Uterus (tissue), 4 donors: ENCODE measurements at regions of chr4 and their contacts with region 1.

Region 1: DNA sequence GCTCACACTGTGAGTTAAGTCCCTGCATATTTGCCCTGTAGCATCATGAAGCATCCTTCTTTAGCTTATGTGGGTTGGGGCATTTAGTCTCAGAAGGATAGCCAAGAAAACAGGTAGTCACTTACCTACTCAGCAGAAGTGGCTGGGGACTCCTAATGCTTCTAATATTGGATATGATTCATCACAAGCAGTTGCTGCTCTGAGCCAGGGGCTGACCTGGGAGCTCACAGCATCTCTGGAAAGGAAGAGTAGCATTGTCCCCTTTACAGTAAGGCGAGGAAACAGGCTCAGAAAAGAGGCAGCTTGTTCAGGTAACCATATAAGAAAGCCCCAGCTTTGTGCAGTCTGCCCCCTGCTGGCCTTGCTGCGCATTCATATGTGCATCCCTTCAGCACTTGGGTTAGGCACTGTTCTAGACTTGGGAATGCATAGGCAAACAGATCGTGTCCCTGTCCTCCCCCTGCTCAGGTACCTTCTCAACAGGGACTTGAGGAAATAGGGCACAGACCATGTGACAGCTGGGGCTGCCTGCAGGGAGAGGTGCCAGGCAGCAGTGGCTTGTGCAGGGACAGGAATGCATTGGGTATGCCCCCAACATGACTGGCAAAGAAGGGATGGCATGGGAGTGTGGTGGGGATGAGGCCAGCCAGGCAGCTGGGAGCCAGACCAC is 35.7 kb upstream of the TBC1D14 start:
- DNase-seq: peak; percentile 62 to 67
- H3K4me3 ChIP-seq: no peak overlapping the region
- H3K27ac ChIP-seq: no peak overlapping the region
- H3K4me1 ChIP-seq: no peaks in the 10 kb centered on the region
- H3K27me3 ChIP-seq: no peaks in the 10 kb centered on the region
- CTCF ChIP-seq: peak; percentile 65 to 83 (median 70)
- POLR2A ChIP-seq: no peak

Region 2: GRCh38 chr4:6298035-6298434 is 575.9 kb before region 1 on chr4:
- intact Hi-C with region 1: no loop called
- DNase-seq: no peak
- H3K4me3 ChIP-seq: no peak overlapping the region
- H3K27ac ChIP-seq: no peak overlapping the region
- H3K4me1 ChIP-seq: no peaks in the 10 kb centered on the region
- H3K27me3 ChIP-seq: no peaks in the 10 kb centered on the region
- CTCF ChIP-seq: no peak
- POLR2A ChIP-seq: no peak

Region 3: DNA sequence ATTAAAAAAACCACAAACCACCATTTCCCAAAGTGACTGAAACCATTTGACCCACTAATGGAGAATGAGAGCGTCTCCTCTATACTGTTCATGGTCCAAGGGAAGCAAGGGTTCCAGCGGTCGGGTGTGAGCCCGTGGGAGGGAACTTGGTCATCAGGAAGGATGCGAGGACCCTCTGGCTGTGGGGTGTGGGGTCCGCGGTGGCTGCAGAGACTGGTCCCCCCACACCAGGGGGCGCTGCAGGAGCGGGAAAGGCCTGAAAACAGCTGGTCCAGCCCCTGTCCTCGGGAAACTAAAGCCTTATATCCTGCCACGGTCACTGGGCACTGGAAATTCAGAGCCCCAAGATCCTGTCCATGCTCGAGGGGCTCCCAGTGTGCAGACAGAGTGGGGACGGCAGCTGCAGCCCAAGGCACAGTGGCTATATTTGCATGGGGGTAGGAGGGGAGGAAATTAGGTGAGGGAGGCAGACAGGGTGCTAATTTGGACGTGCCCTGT is 153.7 kb before region 1 on chr4:
- intact Hi-C with region 1: loop called (anchors 5 kb)
- DNase-seq: peak; percentile 81 to 83
- H3K4me3 ChIP-seq: no peak overlapping the region
- H3K27ac ChIP-seq: no peak overlapping the region
- H3K4me1 ChIP-seq: peaks cover 0 to 5% of the 10 kb centered on the region in 2 donors
- H3K27me3 ChIP-seq: no peaks in the 10 kb centered on the region
- CTCF ChIP-seq: peak; percentile 93 to 96 (median 94)
- POLR2A ChIP-seq: no peak